Right ventricle myocardium inferior (tissue), 1 donor: ENCODE measurements at regions of chr4 and their contacts with region 1.

Region 1: DNA sequence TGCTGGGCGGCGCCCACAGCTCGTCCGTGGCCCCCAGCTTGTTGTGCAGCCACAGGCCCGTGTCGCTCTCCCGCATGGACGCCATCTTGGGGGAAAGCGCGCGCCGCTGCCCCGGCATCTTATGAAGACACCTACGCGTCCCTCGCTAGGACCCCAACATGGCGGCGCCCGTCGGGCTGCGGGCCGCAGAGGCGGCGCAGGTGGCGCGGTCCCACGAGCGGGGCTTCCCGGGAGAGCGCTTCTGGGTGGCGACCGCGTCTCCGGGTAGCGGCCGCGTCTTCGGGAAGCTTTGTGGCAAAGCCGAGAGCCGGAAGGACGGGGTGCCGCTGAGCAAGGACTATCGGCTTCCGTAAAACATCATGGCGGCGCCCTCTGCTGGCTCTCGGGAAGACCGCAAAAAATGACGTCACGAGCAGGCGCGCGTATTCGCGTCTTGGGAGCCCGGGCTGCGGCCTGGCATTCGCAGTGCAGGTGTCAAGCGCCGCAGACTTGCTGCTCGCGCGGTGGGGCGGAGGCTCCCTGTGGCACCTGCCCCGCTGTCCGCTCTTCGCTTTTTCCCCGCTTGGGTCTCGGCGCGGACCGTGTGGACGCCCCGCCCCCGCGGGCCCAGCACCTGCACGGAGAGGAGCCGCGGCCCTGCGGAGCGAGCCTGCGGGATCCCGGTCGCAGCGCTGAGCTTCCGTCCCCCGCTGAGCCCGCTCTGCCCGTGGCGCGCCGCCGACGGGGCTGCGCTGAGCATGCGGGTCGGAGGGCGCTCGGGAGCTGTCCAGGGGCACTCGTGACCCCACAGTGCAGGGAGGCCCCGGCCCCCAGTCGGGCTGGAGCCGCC is at the start of gene NELFA:
- DNase-seq: peak; percentile 98
- ATAC-seq: peak; percentile 96
- total RNA-seq, gene NELFA: 10.8 TPM

Region 2: DNA sequence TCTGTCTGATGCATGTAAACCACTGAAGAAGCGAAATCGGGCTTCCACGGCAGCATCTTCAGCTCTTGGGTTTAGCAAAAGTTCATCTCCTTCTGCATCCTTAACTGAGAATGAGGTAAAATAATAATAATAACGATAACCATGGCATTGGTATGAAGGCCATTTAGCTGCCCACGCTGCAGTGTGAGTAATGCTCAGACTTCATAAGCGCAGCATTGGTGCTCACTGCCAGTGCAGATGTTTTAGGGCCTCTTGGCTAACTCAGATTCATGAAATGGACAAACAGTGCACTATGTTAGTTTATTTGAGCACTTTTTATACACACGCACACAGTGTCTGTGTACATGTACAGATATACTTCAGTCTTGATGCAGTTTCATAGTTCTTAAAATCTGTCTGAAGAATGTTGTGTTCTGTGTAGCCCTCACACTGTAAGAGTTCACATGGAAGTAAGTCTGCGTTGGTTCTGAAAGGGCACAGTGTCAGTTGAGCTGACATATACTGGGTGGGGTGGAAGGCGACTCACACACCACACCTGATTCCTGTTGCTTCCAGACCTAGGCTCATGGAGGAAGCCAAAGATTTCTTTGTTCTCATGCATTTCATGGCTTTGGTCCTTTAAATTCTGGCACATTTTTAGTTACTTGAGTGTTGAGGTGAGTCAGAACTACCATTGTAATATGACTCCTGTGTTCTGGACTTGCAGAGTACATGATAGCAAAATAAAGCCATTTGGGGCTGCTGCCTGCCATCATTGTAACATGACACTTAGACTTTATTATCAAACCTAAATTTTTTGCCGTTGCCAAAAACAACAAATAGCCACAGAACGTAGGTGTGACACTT is 69.2 kb before region 1 on chr4:
- intact Hi-C with region 1: loop called (anchors 10 kb)
- DNase-seq: no peak
- ATAC-seq: peak; percentile 67